HCT116 (cell line): ENCODE measurements at regions of chr3 and their contacts with region 1.

Region 1: DNA sequence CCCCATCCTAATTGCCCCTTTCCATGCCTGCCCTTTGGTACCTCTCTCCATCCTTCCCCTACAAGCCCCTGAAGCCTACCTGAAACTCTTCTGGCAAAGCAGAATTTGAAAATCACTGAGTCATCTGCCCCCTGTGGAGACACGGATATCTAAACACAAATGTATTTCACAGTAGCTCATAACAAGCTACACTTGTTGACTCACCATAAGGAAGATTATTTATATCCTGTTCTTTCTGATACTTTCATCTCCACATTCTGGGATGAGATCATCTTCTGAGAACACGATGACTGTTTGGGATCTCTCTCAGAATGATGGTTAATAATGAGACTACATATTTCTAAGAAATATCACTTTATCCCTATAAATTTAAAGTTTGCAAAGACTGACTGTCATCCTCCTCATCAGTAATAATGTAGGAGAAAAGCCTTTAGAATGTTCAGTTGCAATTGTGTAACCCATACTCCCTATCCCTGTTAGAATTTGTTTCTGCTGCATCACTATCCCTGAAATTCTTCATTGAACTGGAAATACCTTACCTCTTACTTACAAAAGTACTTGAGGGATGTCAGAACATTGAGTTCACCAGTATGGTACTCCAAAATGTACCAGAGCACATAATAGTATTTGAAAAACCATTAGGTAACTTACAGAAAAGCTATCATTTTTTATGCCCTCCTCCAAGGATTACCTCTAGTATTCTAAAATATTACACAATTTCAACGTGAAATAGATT is 116.1 kb upstream of the IL12A start:
- DNase-seq: peak; percentile 86
- ATAC-seq: peak; percentile 91
- H3K4me3 ChIP-seq: no peak overlapping the region; a peak in 1 of 4 replicates
- H3K27ac ChIP-seq: peak overlapping the region; percentile 19; the same call in 1 of the 2 replicates
- H3K4me1 ChIP-seq: peaks cover 23 to 27% of the 10 kb centered on the region in 2 experiments
- H3K27me3 ChIP-seq: no peaks in the 10 kb centered on the region
- CTCF ChIP-seq: no peak
- POLR2A ChIP-seq: no peak
- RAD21 ChIP-seq: 0 out of 2 replicates have a peak, but pooled peaks have one; percentile 22

Region 2: DNA sequence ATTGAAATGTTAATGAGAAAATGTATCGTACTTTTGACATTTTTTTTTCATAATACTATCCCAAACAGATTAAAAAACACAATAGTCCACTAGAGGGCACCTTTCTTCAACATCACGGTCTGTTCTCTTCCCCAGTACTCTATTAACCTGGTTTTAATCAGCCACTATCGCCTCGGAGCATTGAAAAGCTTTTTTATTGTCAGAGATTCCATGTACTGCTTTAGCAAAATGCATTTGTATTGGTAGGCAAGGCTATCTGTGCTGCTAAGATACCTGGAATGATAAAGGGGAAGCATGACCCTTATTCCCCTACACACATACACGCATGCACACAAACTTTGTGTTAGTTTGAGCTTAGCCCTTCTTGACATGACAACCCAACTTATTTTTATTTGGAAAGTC is 44.0 kb before region 1 on chr3:
- CTCF ChIA-PET with region 1: interaction called, 6 read pairs
- POLR2A ChIA-PET with region 1: no interaction called
- RAD21 ChIA-PET with region 1: no interaction called
- intact Hi-C with region 1: loop called (anchors 5 kb)
- DNase-seq: peak; percentile 35
- ATAC-seq: peak; percentile 74
- H3K4me3 ChIP-seq: no peak overlapping the region
- H3K27ac ChIP-seq: no peak overlapping the region
- H3K4me1 ChIP-seq: peaks cover 30 to 39% of the 10 kb centered on the region in 2 experiments
- H3K27me3 ChIP-seq: no peaks in the 10 kb centered on the region
- CTCF ChIP-seq: peak; percentile 36 to 68 (median 55); a peak in 4 of 6 replicates
- POLR2A ChIP-seq: no peak
- RAD21 ChIP-seq: peak; percentile 70

Region 3: GRCh38 chr3:159861369-159861987 is 11.1 kb before region 1 on chr3:
- CTCF ChIA-PET with region 1: no interaction called
- POLR2A ChIA-PET with region 1: no interaction called
- RAD21 ChIA-PET with region 1: no interaction called
- intact Hi-C with region 1: no loop called
- DNase-seq: no peak
- ATAC-seq: no peak
- H3K4me3 ChIP-seq: no peak overlapping the region
- H3K27ac ChIP-seq: no peak overlapping the region
- H3K4me1 ChIP-seq: peaks cover 10 to 17% of the 10 kb centered on the region in 2 experiments
- H3K27me3 ChIP-seq: no peaks in the 10 kb centered on the region
- CTCF ChIP-seq: no peak
- POLR2A ChIP-seq: no peak
- RAD21 ChIP-seq: no peak

Region 4: DNA sequence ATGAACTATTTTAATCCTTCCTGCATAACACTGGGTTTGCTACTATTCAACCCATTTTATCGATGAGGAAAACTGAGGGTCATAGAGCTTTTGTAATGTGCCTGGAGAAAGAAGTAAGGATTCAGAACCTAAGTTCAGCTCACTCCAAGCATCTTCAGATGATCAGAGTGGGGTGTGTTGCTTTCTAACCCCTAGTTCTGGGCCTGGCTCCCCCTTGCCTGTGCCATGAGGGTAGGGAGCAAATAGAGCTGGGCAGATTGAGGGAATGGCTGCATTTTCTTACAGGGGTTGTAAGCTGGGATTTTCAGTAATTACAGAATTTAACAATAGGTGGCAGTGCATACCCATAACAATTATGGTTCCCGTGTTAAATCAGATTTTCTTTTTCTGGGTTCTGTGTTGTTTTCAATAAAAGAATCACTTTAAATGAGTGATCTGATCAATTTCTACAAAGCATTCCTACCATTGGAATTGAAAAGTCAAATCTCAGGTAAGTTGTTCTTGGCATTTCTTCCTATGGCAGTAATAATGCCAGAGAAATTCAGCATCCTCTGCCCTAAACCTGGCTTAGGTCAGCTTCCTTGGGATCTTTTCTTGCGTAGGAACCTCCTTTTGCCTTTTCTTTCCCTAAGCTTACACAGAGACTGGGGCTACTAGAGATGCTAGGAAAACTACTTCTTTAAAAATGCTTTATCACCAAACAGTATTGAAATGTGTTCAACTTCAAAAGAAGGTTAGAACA is 12.3 kb after region 1 on chr3:
- CTCF ChIA-PET with region 1: interaction called, 16 read pairs
- POLR2A ChIA-PET with region 1: interaction called, 4 read pairs
- RAD21 ChIA-PET with region 1: no interaction called
- intact Hi-C with region 1: no loop called
- DNase-seq: no peak
- ATAC-seq: peak; percentile 86
- H3K4me3 ChIP-seq: no peak overlapping the region
- H3K27ac ChIP-seq: no peak overlapping the region
- H3K4me1 ChIP-seq: peaks cover 0 to 9% of the 10 kb centered on the region in 2 experiments; a peak in 2 of 4 replicates
- H3K27me3 ChIP-seq: no peaks in the 10 kb centered on the region
- CTCF ChIP-seq: peak; percentile 46 to 62 (median 59); a peak in 5 of 6 replicates
- POLR2A ChIP-seq: no peak
- RAD21 ChIP-seq: peak; percentile 73